Dorsolateral prefrontal cortex (tissue), 120 donors: ENCODE measurements at regions of chr17 and their contacts with region 1.

Region 1: GRCh38 chr17:27473748-27474609 is 17.7 kb downstream of the KSR1 start:
- DNase-seq: no peak
- H3K4me3 ChIP-seq: no peak overlapping the region
- H3K27ac ChIP-seq: peak overlapping the region in 6 of 59 donors; percentile 4 to 36 (median 12)
- H3K27me3 ChIP-seq: no peaks in the 10 kb centered on the region
- CTCF ChIP-seq: no peak

Region 2: DNA sequence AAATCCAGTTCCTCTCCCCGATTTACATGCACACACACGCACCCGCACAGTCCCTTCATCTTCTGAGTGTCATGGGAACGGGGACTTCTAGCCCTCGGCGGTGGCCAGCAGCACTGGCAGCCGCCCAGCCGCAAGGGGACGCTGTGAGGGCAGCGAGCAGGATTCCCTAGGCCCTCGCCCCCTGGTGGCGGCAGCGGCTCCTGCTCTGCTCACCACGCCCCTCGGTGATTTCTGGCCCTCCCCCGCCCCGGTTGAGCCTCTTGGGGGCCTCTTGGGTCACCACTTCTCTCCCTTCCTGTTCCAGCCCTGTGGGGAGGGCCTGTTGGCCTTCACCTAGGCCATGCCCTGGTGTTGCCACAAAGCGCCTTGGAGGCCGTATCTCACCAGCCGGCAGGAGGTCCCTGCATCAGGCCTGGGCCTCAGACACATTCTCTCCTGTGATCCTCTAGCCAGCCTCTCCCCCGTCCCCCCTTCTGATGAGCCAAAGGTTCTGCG is 92.9 kb before region 1 on chr17:
- intact Hi-C with region 1: no loop called
- DNase-seq: peak in 8 of 10 donors; percentile 29 to 67 (median 49)
- H3K4me3 ChIP-seq: peak overlapping the region in 39 of 59 donors; percentile 10 to 64 (median 51)
- H3K27ac ChIP-seq: peak overlapping the region in 3 of 59 donors; percentile 55 to 79 (median 75)
- H3K27me3 ChIP-seq: no peaks in the 10 kb centered on the region
- CTCF ChIP-seq: peak in 55 of 56 donors; percentile 35 to 93 (median 75)

Region 3: DNA sequence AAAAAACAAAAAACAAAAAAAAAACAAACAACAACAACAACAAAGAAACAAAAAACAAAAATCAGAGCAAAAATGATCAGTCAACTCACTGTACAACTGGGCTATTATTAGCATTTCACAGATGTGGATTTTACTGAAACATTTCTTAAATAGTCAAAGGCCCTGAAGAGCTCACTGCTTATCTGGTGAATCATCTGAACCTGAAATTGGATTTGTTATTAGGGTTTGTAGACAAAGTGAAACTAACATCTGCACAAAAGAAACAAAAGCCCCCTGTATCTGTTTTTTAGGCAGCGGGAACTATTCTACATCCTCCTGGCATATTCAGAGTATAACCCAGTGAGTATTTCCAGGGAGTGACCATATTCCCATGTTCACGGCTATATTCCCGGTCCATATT is 50.3 kb before region 1 on chr17:
- intact Hi-C with region 1: loop called in 1 of 2 experiments (anchors 5 kb)
- DNase-seq: no peak
- H3K4me3 ChIP-seq: no peak overlapping the region
- H3K27ac ChIP-seq: no peak overlapping the region
- H3K27me3 ChIP-seq: no peaks in the 10 kb centered on the region
- CTCF ChIP-seq: no peak

Region 4: DNA sequence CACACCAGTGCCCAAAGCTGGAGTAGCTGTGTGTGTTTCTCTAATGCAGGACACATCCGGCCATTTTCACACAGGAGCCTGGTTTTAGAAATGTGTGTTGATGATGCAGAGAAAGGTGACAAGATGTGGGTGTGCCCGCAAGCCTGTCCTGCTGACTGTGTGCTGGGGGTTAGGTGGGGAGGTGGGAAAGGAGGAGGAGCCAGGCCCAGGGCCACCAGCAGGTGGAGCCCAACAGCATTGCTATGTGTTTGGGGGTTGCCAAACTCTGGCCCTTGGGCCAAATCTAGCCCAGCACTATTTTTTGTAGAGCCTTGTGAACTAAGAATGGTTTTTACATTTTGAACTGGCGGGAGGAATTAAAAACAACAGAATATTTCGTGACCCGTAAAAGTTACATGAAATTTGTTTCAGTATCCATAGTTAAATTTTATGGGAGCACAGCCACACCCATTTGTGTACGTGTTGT is 95.3 kb after region 1 on chr17:
- intact Hi-C with region 1: no loop called
- DNase-seq: peak in 1 of 10 donors; percentile 27
- H3K4me3 ChIP-seq: no peak overlapping the region
- H3K27ac ChIP-seq: peak overlapping the region in 15 of 59 donors; percentile 6 to 60 (median 35)
- H3K27me3 ChIP-seq: no peaks in the 10 kb centered on the region
- CTCF ChIP-seq: peak in 54 of 56 donors; percentile 23 to 69 (median 55)